PC-3 (cell line): ENCODE measurements at regions of chr1 and their contacts with region 1.

Region 1: GRCh38 chr1:183471743-183472487 is 384 bp upstream of the SMG7 start:
- DNase-seq: peak; percentile 85
- ATAC-seq: peak; percentile 54
- H3K4me3 ChIP-seq: peak overlapping the region; percentile 97
- H3K27ac ChIP-seq: peak overlapping the region; percentile 97
- H3K4me1 ChIP-seq: peaks cover 43% of the 10 kb centered on the region
- H3K27me3 ChIP-seq: no peaks in the 10 kb centered on the region
- CTCF ChIP-seq: no peak

Region 2: DNA sequence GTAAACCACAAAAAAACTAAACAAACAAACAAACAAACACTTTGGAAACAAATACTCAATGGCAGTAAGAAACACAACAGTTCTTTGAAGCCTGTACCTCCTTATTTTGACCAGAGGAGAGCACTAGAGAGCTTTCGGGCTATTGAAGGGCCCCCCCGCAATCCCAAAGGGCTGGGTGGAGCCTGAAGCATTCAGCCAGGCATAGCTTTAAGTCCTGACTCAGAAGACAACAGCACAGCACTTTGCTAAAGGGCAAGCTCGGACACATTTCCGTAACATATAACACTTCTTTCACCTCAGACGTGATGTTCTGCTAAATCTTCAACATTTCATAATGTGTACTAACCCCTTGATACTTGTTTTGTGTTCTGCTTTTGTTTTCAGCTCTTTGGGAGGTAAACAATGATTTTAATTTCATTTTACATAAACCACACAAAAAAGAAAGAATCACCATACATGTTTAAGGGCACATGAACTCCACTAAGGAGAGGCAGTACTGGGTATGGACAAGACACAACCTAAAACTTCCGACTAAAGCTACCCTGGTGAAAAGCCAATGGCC is 509.3 kb before region 1 on chr1:
- CTCF ChIA-PET with region 1: no interaction called
- POLR2A ChIA-PET with region 1: no interaction called
- intact Hi-C with region 1: loop called (anchors 5 kb)
- DNase-seq: peak; percentile 80
- ATAC-seq: peak; percentile 100
- H3K4me3 ChIP-seq: peak overlapping the region; percentile 60
- H3K27ac ChIP-seq: peak overlapping the region; percentile 43
- H3K4me1 ChIP-seq: peaks cover 5% of the 10 kb centered on the region
- H3K27me3 ChIP-seq: no peaks in the 10 kb centered on the region
- CTCF ChIP-seq: peak; percentile 90

Region 3: GRCh38 chr1:183281553-183282091 is 190.3 kb before region 1 on chr1:
- CTCF ChIA-PET with region 1: no interaction called
- POLR2A ChIA-PET with region 1: no interaction called
- intact Hi-C with region 1: loop called (anchors 1 kb)
- DNase-seq: peak; percentile 90
- ATAC-seq: peak; percentile 62
- H3K4me3 ChIP-seq: no peak overlapping the region
- H3K27ac ChIP-seq: no peak overlapping the region
- H3K4me1 ChIP-seq: peaks cover 34% of the 10 kb centered on the region
- H3K27me3 ChIP-seq: no peaks in the 10 kb centered on the region
- CTCF ChIP-seq: peak; percentile 80

Region 4: GRCh38 chr1:183417772-183418491 is 54.0 kb before region 1 on chr1 and contains the start of gene NMNAT2:
- CTCF ChIA-PET with region 1: no interaction called
- POLR2A ChIA-PET with region 1: no interaction called
- intact Hi-C with region 1: loop called (anchors 1 kb)
- DNase-seq: peak; percentile 58
- ATAC-seq: peak; percentile 92
- H3K4me3 ChIP-seq: peak within 1 kb of the TSS; percentile 93
- H3K27ac ChIP-seq: no peak within 1 kb of the TSS
- H3K4me1 ChIP-seq: peaks cover 18% of the 10 kb centered on the region
- H3K27me3 ChIP-seq: no peaks in the 10 kb centered on the region
- CTCF ChIP-seq: no peak
- total RNA-seq, gene NMNAT2: 6.0 and 6.6 TPM in 2 replicates

Region 5: DNA sequence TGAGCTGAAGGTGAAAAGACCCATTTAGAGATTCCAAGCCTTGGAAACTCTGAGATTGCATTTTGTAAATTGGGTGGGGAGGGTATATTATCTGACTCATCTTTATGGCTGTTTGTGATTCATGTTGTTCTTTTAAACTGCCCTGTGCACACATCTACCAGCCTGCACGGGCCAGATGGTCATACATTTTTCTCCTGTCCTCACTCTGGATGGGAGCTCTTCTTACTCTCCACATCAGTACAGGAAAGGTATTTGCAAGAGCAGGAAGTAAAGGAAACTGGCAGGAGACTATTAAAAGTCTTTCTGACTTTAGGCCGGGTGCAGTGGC is 39.4 kb before region 1 on chr1:
- CTCF ChIA-PET with region 1: no interaction called
- POLR2A ChIA-PET with region 1: interaction called, 5 read pairs
- intact Hi-C with region 1: loop called (anchors 1 kb)
- DNase-seq: peak; percentile 84
- ATAC-seq: peak; percentile 98
- H3K4me3 ChIP-seq: no peak overlapping the region
- H3K27ac ChIP-seq: peak overlapping the region; percentile 83
- H3K4me1 ChIP-seq: peaks cover 26% of the 10 kb centered on the region
- H3K27me3 ChIP-seq: no peaks in the 10 kb centered on the region
- CTCF ChIP-seq: no peak

Region 6: DNA sequence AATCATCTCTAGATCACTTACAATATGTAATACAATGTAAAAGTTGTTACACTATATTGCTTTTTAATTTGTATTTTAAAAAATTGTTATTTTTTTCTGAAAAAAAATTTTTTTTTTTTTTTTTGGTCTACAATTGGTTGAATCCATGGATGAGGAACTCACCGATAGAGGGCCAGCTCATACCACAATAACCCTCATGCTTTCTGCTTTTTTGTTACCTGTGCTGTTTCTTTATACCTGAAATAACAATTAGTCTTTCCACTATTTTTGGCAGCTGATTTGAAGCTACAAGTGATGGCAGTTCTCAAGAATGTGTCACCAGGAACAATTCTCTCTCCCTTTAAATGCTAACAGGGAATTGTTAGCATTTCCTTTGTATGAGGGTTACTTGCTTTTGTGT is 12.3 kb after region 1 on chr1:
- CTCF ChIA-PET with region 1: no interaction called
- POLR2A ChIA-PET with region 1: no interaction called
- intact Hi-C with region 1: no loop called
- DNase-seq: no peak
- ATAC-seq: no peak
- H3K4me3 ChIP-seq: no peak overlapping the region
- H3K27ac ChIP-seq: no peak overlapping the region
- H3K4me1 ChIP-seq: peaks cover 18% of the 10 kb centered on the region
- H3K27me3 ChIP-seq: no peaks in the 10 kb centered on the region
- CTCF ChIP-seq: no peak

Region 7: DNA sequence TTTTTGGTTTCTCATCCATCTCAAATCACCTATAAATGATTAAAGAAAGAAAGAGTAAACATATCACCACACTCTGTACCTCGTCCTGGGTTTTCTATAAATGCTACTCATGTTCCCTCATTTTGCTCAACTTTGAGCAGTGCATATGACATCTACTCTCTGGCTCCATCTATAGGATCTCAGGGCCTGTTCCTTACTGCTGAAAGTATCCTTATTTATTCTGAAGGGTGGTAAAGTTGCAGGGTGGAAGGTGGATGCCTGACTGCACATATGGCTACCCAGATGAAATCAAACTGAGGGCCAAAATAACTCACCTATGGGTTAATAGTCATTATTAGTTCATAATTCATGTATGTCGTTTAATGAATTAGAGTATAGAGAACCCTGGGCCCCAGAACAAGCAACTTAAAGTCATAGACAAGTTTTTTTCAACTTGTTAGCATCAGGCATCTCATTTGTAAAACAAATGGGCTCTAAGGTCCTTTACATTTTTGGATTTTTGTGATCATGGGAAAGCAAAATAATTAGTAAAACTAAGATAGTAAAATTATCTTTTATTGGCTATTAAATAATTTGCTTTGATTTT is 71.8 kb after region 1 on chr1:
- CTCF ChIA-PET with region 1: no interaction called
- POLR2A ChIA-PET with region 1: no interaction called
- intact Hi-C with region 1: loop called (anchors 1 kb)
- DNase-seq: peak; percentile 66
- ATAC-seq: peak; percentile 97
- H3K4me3 ChIP-seq: no peak overlapping the region
- H3K27ac ChIP-seq: no peak overlapping the region
- H3K4me1 ChIP-seq: 0 out of 2 replicates have a peak, but pooled peaks cover 4% of the 10 kb centered on the region
- H3K27me3 ChIP-seq: no peaks in the 10 kb centered on the region
- CTCF ChIP-seq: peak; percentile 74

Region 8: DNA sequence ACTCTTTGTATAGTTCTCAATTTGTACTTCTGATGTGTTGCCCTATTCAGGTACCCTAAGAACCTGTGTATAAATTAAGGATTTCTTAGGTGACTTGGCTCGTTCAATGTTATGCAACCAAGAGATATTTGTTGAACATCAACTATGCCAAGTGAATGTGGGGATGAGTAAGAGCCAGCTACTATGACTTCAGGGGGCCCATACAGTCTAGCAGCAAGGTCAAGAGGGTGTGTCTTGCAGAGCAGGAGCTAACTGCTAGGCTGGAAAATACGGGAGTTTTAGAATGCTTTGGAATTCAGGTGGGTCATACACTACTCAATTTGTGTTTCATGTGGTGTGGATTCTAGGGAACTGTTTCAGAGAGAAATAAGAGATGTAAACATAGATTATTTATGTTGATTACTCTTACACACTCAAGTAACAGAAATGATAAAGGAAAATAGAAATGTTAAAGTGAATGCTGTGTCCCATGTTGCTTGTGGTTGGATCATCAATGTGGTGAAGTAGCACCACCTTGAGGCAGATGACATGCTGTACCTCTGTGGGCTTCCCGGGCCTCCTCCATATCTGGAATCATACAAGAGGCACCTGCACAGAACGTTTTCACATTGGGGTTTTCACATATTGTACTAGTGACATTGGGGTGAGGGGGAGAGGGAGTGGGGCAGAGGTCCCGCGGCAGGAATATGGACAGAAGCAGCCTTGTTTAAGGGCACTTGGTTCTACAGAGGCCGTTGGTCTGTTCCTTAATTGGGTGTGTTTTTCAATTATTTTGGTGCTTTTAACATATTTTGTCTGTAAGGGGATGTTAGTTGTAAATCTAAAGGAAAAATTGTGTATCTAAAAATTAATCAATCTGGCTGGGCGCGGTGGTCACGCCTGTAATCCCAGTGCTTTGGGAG is 151.2 kb after region 1 on chr1:
- CTCF ChIA-PET with region 1: no interaction called
- POLR2A ChIA-PET with region 1: no interaction called
- intact Hi-C with region 1: loop called (anchors 2 kb)
- DNase-seq: peak; percentile 70
- ATAC-seq: peak; percentile 78
- H3K4me3 ChIP-seq: no peak overlapping the region
- H3K27ac ChIP-seq: peak overlapping the region; percentile 63
- H3K4me1 ChIP-seq: peaks cover 32% of the 10 kb centered on the region
- H3K27me3 ChIP-seq: no peaks in the 10 kb centered on the region
- CTCF ChIP-seq: peak; percentile 87